ENCODE measurements at regions of chr15 and their contacts with region 1.

Region 1: DNA sequence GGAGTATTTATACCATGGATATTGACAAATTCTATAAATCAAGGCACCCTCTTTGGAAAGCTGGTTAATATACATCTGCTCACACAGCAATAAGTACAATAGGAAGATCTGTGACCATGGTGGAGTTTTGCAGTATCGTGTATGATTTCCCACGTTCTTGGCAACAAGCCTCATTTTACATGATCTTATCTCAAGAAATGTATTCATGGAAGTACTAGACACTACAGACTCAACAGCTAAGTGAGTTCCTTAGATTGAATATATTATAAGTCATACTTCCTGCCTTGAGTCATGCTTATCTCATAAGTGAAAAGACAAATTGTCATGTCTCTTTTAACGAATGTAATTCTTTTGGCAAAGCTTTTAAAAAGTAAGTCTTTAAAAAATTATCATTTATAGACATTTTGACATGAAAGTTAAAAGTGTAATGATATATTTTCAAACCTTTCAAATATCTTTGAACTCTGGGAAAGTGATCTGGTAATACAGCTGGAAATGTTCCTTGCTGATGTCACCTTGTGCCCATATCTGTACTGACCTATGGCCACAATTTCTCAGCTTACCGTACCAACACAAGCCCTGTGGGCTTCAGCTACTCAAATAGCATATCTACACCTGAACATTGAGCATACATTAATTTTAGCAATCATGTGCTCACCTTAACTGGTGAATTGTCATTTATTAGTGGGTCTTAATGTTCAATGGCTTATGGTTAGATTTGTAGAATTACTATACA is 130.3 kb upstream of the TMC3 start:
- DNase-seq: no peak
- ATAC-seq: no peak

Region 2: GRCh38 chr15:81108427-81108826 is 395.9 kb before region 1 on chr15:
- intact Hi-C with region 1: no loop called
- DNase-seq: no peak
- ATAC-seq: no peak

Region 3: GRCh38 chr15:81939604-81940440 is 435.5 kb after region 1 on chr15:
- intact Hi-C with region 1: loop called in 1 of 2 experiments (anchors 10 kb)
- DNase-seq: no peak
- ATAC-seq: no peak